Heart left ventricle (tissue), 16 donors: ENCODE measurements at regions of chr19 and their contacts with region 1.

Region 1: GRCh38 chr19:54023191-54023590 is 31.8 kb downstream of the CACNG6 start:
- DNase-seq: no peak
- ATAC-seq: no peak
- H3K4me3 ChIP-seq: no peak overlapping the region
- H3K27ac ChIP-seq: no peak overlapping the region
- H3K4me1 ChIP-seq: peaks cover 0 to 29% (median 0%) of the 10 kb centered on the region in 12 donors
- H3K27me3 ChIP-seq: peaks cover 0 to 21% (median 11%) of the 10 kb centered on the region in 9 donors
- CTCF ChIP-seq: no peak
- POLR2A ChIP-seq: no peak

Region 2: DNA sequence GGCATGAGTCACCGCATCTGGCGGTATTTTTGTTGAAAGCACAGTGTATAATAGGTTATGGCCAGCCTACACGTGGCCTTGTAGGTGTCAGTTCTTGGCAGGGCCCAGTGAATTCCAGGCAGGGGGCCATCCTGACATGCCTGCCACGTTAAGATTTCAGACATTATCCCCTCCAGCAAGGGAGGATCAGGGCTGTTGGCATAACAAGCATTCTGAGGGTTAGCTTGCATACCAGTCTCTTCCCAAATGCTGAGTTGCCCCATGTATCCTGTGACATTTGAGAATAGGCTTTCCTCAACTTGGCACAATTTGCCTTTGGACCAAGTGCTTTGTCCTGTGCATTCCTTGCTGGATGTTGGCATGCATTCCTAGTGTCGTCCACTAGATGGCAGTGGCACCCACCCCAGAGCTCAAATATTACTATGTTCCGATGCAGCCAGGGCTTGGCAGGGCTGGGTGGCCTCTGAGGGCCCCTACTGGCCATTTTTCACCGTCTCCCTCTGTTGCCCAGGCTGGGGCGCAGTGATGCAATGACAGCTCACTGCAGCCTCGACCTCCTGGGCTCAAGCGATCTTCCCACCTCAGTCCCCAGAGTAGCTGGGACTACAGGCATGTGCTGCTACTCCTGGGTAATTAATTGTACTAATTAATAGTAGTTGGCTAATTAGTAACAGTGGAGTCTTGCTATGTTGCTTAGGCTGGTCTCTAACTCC is 230.3 kb before region 1 on chr19:
- intact Hi-C with region 1: loop called in 4 of 10 experiments (anchors 5 to 10 kb)
- DNase-seq: peak; percentile 77 to 90 (median 85)
- ATAC-seq: peak; percentile 96 to 99 (median 97)
- H3K4me3 ChIP-seq: no peak overlapping the region
- H3K27ac ChIP-seq: no peak overlapping the region
- H3K4me1 ChIP-seq: no peaks in the 10 kb centered on the region
- H3K27me3 ChIP-seq: no peaks in the 10 kb centered on the region
- CTCF ChIP-seq: peak; percentile 94 to 100 (median 99)
- POLR2A ChIP-seq: no peak

Region 3: DNA sequence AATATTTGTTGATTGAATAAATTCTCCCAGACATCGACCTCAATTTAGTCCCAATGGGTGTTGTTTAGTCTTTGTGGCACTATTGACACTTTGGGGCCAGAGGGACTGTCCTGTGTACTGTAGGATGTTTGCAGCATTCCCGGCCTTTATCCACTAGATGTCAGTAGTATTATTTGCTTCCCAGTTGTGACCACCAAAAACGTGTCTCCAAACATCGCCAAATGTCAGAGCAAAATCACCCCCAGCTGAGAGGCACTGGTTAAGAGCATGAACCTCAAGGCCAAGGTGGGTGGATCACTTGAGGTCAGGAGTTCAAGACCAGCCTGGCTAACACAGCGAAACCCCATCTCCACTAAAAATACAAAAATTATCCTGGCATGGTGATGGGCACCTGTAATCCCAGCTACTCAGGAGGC is 214.5 kb before region 1 on chr19:
- intact Hi-C with region 1: loop called in 7 of 10 experiments (anchors 2 to 10 kb)
- DNase-seq: no peak
- ATAC-seq: peak in 2 of 4 donors; percentile 15 to 59
- H3K4me3 ChIP-seq: no peak overlapping the region
- H3K27ac ChIP-seq: no peak overlapping the region
- H3K4me1 ChIP-seq: peaks cover 0 to 4% (median 0%) of the 10 kb centered on the region in 12 donors
- H3K27me3 ChIP-seq: peaks cover 0 to 5% (median 0%) of the 10 kb centered on the region in 9 donors
- CTCF ChIP-seq: peak; percentile 16 to 65 (median 42)
- POLR2A ChIP-seq: no peak

Region 4: DNA sequence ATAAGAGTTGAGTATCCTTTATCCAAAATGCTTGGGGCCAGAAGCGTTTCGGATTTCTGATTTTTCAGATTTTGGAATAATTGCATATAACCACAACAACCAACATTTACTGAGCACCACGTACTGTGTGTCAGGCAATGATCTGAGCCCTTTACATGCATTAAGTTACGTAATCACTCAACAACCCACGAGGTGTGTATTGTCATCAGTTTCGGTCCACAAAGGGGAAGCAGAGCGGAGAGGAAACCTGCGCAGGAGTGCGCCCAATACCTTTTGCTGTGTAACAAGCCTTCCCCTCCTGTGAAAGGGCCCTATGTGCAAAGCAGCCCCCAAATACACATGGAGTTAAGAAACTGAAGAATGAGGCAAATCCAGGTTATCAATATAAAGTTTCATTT is 178.3 kb before region 1 on chr19:
- intact Hi-C with region 1: loop called (anchors 1 to 5 kb)
- DNase-seq: no peak
- ATAC-seq: no peak
- H3K4me3 ChIP-seq: no peak overlapping the region
- H3K27ac ChIP-seq: no peak overlapping the region
- H3K4me1 ChIP-seq: peaks cover 0 to 49% (median 7%) of the 10 kb centered on the region in 12 donors
- H3K27me3 ChIP-seq: no peaks in the 10 kb centered on the region
- CTCF ChIP-seq: no peak
- POLR2A ChIP-seq: no peak

Region 5: GRCh38 chr19:53906211-53907192 is 116.7 kb before region 1 on chr19:
- intact Hi-C with region 1: loop called (anchors 2 to 5 kb)
- DNase-seq: peak in 4 of 5 donors; percentile 37 to 77 (median 52)
- ATAC-seq: peak; percentile 15 to 62 (median 54)
- H3K4me3 ChIP-seq: no peak overlapping the region
- H3K27ac ChIP-seq: no peak overlapping the region
- H3K4me1 ChIP-seq: peaks cover 0 to 24% (median 5%) of the 10 kb centered on the region in 12 donors
- H3K27me3 ChIP-seq: peaks cover 28 to 78% (median 56%) of the 10 kb centered on the region in 9 donors
- CTCF ChIP-seq: peak; percentile 55 to 85 (median 74)
- POLR2A ChIP-seq: no peak

Region 6: DNA sequence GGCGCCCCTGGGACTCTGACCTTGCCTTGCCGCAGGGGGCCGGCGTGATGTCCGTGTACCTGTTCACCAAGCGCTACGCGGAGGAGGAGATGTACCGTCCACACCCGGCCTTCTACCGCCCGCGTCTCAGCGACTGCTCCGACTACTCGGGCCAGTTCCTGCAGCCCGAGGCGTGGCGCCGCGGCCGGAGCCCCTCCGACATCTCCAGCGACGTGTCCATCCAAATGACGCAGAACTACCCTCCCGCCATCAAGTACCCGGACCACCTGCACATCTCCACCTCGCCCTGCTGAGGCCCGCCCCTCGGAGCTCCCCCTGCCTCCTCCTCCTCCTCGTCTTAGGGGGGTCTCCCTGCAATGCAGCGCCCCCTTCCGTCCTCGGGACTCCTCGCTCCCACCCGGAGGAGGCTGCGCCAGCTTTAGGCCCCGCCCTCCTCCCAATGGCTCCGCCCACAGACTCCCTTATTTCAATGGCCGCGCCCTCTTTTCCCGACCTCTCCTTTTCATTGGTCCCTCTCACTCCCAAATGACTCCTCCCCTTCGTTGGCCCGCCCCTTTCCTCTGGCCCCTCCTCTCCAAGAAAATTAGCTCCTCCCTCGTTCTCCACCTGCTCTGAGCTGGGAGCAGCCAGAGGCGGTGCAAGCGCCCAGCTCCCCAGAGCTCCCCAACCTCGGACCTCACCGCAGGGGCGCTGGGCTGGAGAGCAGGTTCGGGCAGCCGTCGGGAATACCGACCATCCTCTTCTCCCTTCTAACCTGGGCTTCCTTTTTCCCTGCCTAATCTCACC is 81.0 kb before region 1 on chr19:
- intact Hi-C with region 1: no loop called
- DNase-seq: no peak
- ATAC-seq: no peak
- H3K4me3 ChIP-seq: no peak overlapping the region
- H3K27ac ChIP-seq: no peak overlapping the region
- H3K4me1 ChIP-seq: no peaks in the 10 kb centered on the region
- H3K27me3 ChIP-seq: peaks cover 13 to 72% (median 41%) of the 10 kb centered on the region in 9 donors
- CTCF ChIP-seq: no peak
- POLR2A ChIP-seq: no peak

Region 7: GRCh38 chr19:53953383-53953782 is 69.8 kb before region 1 on chr19:
- intact Hi-C with region 1: no loop called
- DNase-seq: no peak
- ATAC-seq: no peak
- H3K4me3 ChIP-seq: no peak overlapping the region
- H3K27ac ChIP-seq: no peak overlapping the region
- H3K4me1 ChIP-seq: no peaks in the 10 kb centered on the region
- H3K27me3 ChIP-seq: peaks cover 8 to 90% (median 29%) of the 10 kb centered on the region in 9 donors
- CTCF ChIP-seq: no peak
- POLR2A ChIP-seq: no peak

Region 8: DNA sequence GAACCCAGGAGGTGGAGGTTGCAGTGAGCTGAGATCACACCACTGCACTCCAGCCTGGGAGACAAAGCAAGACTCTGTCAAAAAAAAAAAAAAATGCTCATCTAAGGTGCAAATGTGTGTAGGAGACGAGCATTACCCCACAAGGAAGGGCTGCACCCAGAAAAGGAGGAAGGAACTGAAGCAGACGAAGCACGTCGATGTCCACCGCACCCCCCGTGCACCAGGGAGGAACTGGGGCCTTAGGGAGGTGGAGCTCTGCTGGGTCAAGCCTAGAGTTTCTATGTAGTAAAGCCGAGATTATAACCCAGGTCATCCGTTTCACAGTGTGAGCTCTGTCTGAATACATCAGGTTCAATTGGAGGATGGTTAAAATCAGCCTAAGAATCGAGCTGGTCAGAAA is 39.5 kb after region 1 on chr19:
- intact Hi-C with region 1: no loop called
- DNase-seq: peak in 3 of 5 donors; percentile 26 to 78 (median 38)
- ATAC-seq: peak in 1 of 4 donors; percentile 67
- H3K4me3 ChIP-seq: no peak overlapping the region
- H3K27ac ChIP-seq: peak overlapping the region in 1 of 12 donors; percentile 20
- H3K4me1 ChIP-seq: no peaks in the 10 kb centered on the region
- H3K27me3 ChIP-seq: peaks cover 0 to 32% (median 0%) of the 10 kb centered on the region in 9 donors
- CTCF ChIP-seq: no peak
- POLR2A ChIP-seq: no peak